PC-9 (cell line): ENCODE measurements at regions of chr1 and their contacts with region 1.

Region 1: DNA sequence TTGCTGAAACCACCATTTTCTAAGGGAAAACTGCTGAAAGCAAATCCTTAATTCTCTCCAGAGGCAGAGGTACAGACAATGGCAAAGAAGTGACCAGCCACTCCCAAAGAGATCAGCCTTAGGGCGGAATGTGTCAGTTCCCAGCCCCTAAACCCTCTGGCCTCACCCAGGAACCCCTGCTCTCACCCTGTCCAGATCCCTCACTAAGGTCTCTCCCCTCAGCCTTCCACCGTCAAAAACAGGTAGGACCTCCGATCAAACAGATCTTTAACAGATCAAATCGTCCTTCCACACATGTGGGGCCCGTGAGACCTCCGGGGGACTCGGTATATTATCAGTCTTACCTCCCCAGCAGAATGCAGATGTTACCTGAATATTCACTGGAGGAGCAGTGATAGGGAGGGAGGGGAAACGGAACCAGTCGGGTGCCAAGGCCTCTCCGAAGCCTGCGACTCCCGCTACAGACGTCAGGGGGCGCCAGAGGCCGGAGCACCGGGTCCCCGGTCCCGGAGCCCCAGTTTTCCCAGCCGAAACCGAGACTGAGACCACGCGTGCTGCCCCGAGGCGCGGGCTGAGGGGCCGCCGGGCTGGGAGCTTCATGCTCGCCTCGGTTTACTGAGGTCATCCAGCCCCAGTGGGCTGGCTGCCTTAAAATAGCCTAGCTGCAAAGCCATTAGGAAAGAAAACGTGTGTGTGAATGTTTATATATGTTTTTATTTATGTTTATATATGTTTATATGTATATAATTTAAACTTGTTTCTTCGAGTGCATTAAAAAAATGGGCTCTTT is 23.6 kb downstream of the GPA33 start:
- DNase-seq: peak; percentile 42 to 82
- H3K4me3 ChIP-seq: peak overlapping the region; percentile 55; the same call in 1 of the 2 replicates
- H3K27ac ChIP-seq: 0 out of 2 replicates have a peak overlapping the region, but pooled peaks have one; percentile 27
- H3K4me1 ChIP-seq: no peaks in the 10 kb centered on the region
- H3K27me3 ChIP-seq: no peaks in the 10 kb centered on the region
- CTCF ChIP-seq: peak; percentile 99

Region 2: DNA sequence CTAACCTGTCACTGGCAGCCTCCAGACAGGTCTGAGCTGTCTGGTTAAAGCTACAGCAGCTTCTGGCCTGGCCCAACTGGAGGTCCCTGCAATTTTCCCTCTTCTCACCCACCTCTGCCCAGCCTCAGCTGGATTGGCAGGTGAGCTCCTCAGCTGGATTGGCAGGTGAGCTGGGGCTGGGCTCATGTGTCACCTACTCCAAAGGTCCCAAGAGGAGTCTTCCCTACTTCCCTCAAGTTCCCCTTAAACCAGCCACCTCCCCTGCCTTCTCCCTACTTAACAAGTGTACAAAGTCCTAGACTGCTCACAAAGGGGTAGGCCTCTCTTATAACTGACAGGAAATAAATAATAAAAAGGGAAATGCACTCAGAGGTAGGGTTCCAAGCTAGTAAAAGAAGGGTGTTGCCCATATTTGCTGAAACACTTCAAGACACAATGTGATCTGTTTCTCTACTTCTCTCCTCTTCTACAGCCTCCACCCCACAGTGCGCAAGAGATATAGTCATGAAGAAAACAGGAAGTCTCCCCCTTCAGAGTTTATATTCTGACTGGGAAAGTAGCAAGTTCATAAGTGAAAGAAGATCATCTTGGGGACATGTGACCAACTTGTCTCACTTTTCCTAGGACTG is 23.9 kb after region 1 on chr1 and contains the start of gene GPA33:
- CTCF ChIA-PET with region 1: no interaction called
- POLR2A ChIA-PET with region 1: no interaction called
- intact Hi-C with region 1: no loop called
- DNase-seq: no peak
- H3K4me3 ChIP-seq: no peak within 1 kb of the TSS
- H3K27ac ChIP-seq: no peak within 1 kb of the TSS
- H3K4me1 ChIP-seq: peaks cover 8% of the 10 kb centered on the region
- H3K27me3 ChIP-seq: no peaks in the 10 kb centered on the region
- CTCF ChIP-seq: no peak
- total RNA-seq, gene GPA33: not detected in 2 replicates

Region 3: GRCh38 chr1:167105271-167106118 is 39.0 kb after region 1 on chr1:
- CTCF ChIA-PET with region 1: no interaction called
- POLR2A ChIA-PET with region 1: no interaction called
- intact Hi-C with region 1: loop called (anchors 5 kb)
- DNase-seq: peak in 1 of 2 experiments; percentile 68
- H3K4me3 ChIP-seq: no peak overlapping the region
- H3K27ac ChIP-seq: 0 out of 2 replicates have a peak overlapping the region, but pooled peaks have one; percentile 2
- H3K4me1 ChIP-seq: peaks cover 75% of the 10 kb centered on the region
- H3K27me3 ChIP-seq: no peaks in the 10 kb centered on the region
- CTCF ChIP-seq: no peak

Region 4: GRCh38 chr1:167207940-167208623 is 141.6 kb after region 1 on chr1:
- CTCF ChIA-PET with region 1: interaction called, 3 read pairs
- POLR2A ChIA-PET with region 1: interaction called, 3 read pairs
- intact Hi-C with region 1: loop called (anchors 1 kb)
- DNase-seq: no peak
- H3K4me3 ChIP-seq: no peak overlapping the region
- H3K27ac ChIP-seq: peak overlapping the region; percentile 13; the same call in 1 of the 2 replicates
- H3K4me1 ChIP-seq: peaks cover 19% of the 10 kb centered on the region
- H3K27me3 ChIP-seq: no peaks in the 10 kb centered on the region
- CTCF ChIP-seq: peak; percentile 46

Region 5: DNA sequence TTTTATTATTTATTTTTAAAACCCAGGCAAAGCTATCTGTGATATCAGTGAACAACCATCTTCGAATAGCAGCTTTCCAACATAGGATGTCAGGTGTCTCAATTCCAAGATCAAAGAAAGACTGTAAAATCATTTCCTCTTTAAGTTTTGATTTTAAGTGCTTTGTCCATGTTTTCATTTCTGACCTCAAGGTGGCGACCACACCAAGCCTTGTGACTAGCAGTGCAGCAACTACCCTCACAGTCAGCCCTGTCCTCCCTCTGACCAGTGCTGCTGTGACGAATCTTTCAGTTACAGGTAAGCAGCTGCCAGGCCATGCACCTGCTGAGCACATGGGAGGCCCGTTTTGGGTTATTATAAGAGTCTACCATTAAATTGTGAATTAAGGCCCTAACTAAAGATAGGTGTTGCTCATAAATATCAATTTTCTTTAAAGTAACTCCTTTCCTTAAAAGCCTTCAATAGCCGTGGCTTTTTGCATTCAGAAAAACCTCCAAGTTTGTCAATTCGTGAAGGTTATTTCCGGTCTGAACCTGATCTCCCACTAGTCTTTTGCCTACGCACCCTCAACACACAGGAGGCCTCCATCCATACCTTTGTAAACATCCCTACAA is 334.8 kb after region 1 on chr1:
- CTCF ChIA-PET with region 1: interaction called, 3 read pairs
- POLR2A ChIA-PET with region 1: interaction called, 8 read pairs
- intact Hi-C with region 1: loop called (anchors 5 kb)
- DNase-seq: peak; percentile 44 to 54
- H3K4me3 ChIP-seq: no peak overlapping the region
- H3K27ac ChIP-seq: no peak overlapping the region
- H3K4me1 ChIP-seq: peaks cover 12% of the 10 kb centered on the region
- H3K27me3 ChIP-seq: no peaks in the 10 kb centered on the region
- CTCF ChIP-seq: peak; percentile 78

Region 6: GRCh38 chr1:167511374-167511986 is 445.0 kb after region 1 on chr1:
- CTCF ChIA-PET with region 1: no interaction called
- POLR2A ChIA-PET with region 1: interaction called, 16 read pairs
- intact Hi-C with region 1: no loop called
- DNase-seq: no peak
- H3K4me3 ChIP-seq: no peak overlapping the region
- H3K27ac ChIP-seq: no peak overlapping the region
- H3K4me1 ChIP-seq: no peaks in the 10 kb centered on the region
- H3K27me3 ChIP-seq: no peaks in the 10 kb centered on the region
- CTCF ChIP-seq: no peak